ENCODE measurements at regions of chr9 and their contacts with region 1.

Region 1: GRCh38 chr9:114681594-114682332 is at the start of gene TEX48:
- DNase-seq: peak; percentile 56 to 86 (median 69)
- H3K4me3 ChIP-seq: no peak within 1 kb of the TSS
- H3K4me3 Mint-ChIP-seq: peak within 1 kb of the TSS in 6 of 7 donors; percentile 53 to 89 (median 74)
- H3K27ac ChIP-seq: no peak within 1 kb of the TSS
- H3K27ac Mint-ChIP-seq: peak within 1 kb of the TSS in 7 of 8 donors; percentile 3 to 95 (median 79)
- H3K4me1 ChIP-seq: peaks cover 6% of the 10 kb centered on the region
- H3K4me1 Mint-ChIP-seq: peaks cover 18 to 27% (median 19%) of the 10 kb centered on the region in 3 donors
- H3K27me3 ChIP-seq: peaks cover 9% of the 10 kb centered on the region
- H3K27me3 Mint-ChIP-seq: peaks cover 0 to 15% of the 10 kb centered on the region in 2 donors
- total RNA-seq, gene TEX48: 0.46 to 0.86 TPM

Region 2: DNA sequence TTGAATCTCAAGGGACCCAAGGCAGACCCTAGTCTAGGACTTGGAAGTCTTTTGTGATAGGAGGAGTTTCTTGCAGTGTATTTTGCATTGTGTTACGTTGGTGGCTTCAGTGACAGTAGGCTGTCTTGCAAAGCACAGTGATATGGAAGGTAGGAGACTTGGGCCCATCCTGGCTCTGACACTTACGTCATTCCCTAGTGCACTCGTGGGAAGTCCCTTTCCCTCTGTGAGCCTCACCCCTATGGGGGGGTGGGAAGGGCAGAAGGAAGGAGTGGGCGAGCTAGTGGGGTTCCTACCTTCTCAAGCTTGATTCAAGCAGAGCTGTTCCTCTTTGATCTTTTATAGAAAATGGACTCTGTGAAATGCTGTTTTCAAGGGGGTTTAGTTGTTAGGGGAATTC is 14.9 kb before region 1 on chr9:
- CTCF ChIA-PET with region 1: interaction called, 10 read pairs
- POLR2A ChIA-PET with region 1: no interaction called
- DNase-seq: no peak
- H3K4me3 ChIP-seq: no peak overlapping the region
- H3K4me3 Mint-ChIP-seq: no peak overlapping the region
- H3K27ac ChIP-seq: no peak overlapping the region
- H3K27ac Mint-ChIP-seq: peak overlapping the region in 1 of 8 donors; percentile 45
- H3K4me1 ChIP-seq: no peaks in the 10 kb centered on the region
- H3K4me1 Mint-ChIP-seq: peaks cover 0 to 3% (median 2%) of the 10 kb centered on the region in 3 donors
- H3K27me3 ChIP-seq: no peaks in the 10 kb centered on the region
- H3K27me3 Mint-ChIP-seq: peaks cover 10 to 18% of the 10 kb centered on the region in 2 donors

Region 3: GRCh38 chr9:114718801-114719221 is 37.0 kb after region 1 on chr9:
- CTCF ChIA-PET with region 1: interaction called, 10 read pairs
- POLR2A ChIA-PET with region 1: no interaction called
- DNase-seq: peak; percentile 25 to 87 (median 54)
- H3K4me3 ChIP-seq: peak overlapping the region; percentile 2
- H3K4me3 Mint-ChIP-seq: peak overlapping the region in 6 of 7 donors; percentile 60 to 78 (median 64)
- H3K27ac ChIP-seq: no peak overlapping the region
- H3K27ac Mint-ChIP-seq: peak overlapping the region; percentile 18 to 94 (median 86)
- H3K4me1 ChIP-seq: peaks cover 30% of the 10 kb centered on the region
- H3K4me1 Mint-ChIP-seq: peaks cover 39 to 70% (median 55%) of the 10 kb centered on the region in 3 donors
- H3K27me3 ChIP-seq: no peaks in the 10 kb centered on the region
- H3K27me3 Mint-ChIP-seq: no peaks in the 10 kb centered on the region

Region 4: DNA sequence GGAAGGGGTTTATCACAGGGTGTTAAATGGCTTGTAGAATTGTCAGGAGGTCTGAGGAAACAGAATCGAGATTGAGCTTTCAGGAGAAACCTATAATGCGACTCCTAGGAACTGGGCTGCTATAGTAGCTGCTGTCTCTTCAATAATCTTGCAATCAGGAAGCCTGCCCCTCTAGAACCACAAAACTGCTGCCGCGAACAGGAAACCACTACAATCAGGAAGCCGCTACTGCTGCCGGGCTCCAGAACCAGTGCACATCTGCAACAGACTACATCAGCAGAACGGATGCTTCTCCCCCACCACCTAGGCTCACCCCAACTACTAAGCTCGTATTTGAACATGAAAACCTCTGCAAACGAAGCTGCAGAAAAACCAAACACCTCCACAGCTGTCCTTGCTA is 217.0 kb after region 1 on chr9:
- CTCF ChIA-PET with region 1: interaction called, 77 read pairs
- POLR2A ChIA-PET with region 1: no interaction called
- DNase-seq: peak; percentile 54 to 89 (median 88)
- H3K4me3 ChIP-seq: peak overlapping the region; percentile 30
- H3K4me3 Mint-ChIP-seq: no peak overlapping the region
- H3K27ac ChIP-seq: no peak overlapping the region
- H3K27ac Mint-ChIP-seq: no peak overlapping the region
- H3K4me1 ChIP-seq: peaks cover 99% of the 10 kb centered on the region
- H3K4me1 Mint-ChIP-seq: peaks cover 0 to 25% (median 0%) of the 10 kb centered on the region in 3 donors
- H3K27me3 ChIP-seq: no peaks in the 10 kb centered on the region
- H3K27me3 Mint-ChIP-seq: no peaks in the 10 kb centered on the region

Region 5: GRCh38 chr9:114914139-114914538 is 232.4 kb after region 1 on chr9:
- CTCF ChIA-PET with region 1: interaction called, 77 read pairs
- POLR2A ChIA-PET with region 1: no interaction called
- DNase-seq: no peak
- H3K4me3 ChIP-seq: no peak overlapping the region
- H3K4me3 Mint-ChIP-seq: no peak overlapping the region
- H3K27ac ChIP-seq: no peak overlapping the region
- H3K27ac Mint-ChIP-seq: peak overlapping the region; percentile 44 to 90 (median 65)
- H3K4me1 ChIP-seq: peaks cover 39% of the 10 kb centered on the region
- H3K4me1 Mint-ChIP-seq: peaks cover 5 to 82% (median 69%) of the 10 kb centered on the region in 3 donors
- H3K27me3 ChIP-seq: no peaks in the 10 kb centered on the region
- H3K27me3 Mint-ChIP-seq: no peaks in the 10 kb centered on the region

Region 6: GRCh38 chr9:114981070-114981469 is 299.3 kb after region 1 on chr9:
- CTCF ChIA-PET with region 1: no interaction called
- POLR2A ChIA-PET with region 1: no interaction called
- DNase-seq: no peak
- H3K4me3 ChIP-seq: no peak overlapping the region
- H3K4me3 Mint-ChIP-seq: no peak overlapping the region
- H3K27ac ChIP-seq: no peak overlapping the region
- H3K27ac Mint-ChIP-seq: no peak overlapping the region
- H3K4me1 ChIP-seq: no peaks in the 10 kb centered on the region
- H3K4me1 Mint-ChIP-seq: no peaks in the 10 kb centered on the region
- H3K27me3 ChIP-seq: no peaks in the 10 kb centered on the region
- H3K27me3 Mint-ChIP-seq: peaks cover 0 to 2% of the 10 kb centered on the region in 2 donors

Region 7: DNA sequence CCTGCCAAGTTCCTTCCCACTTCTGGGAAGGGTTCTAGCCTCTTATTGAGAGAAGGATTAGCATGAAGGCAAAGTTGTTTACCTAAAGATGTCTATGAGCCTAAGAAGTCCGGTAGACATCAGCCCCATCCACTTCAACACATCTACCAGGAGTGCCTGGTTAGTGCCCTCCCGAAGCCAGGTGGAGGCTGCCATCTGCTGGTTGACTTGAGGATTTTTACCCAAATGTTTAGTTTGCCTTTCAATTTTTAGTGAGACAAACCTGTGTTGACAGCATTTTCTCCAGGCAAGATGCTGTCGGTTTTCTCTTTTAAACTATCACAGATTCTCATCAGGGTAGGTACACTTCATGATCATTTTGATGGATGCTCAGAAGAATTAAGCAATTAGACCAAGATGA is 332.2 kb after region 1 on chr9:
- CTCF ChIA-PET with region 1: interaction called, 151 read pairs
- POLR2A ChIA-PET with region 1: no interaction called
- DNase-seq: peak; percentile 58 to 85 (median 71)
- H3K4me3 ChIP-seq: no peak overlapping the region
- H3K4me3 Mint-ChIP-seq: no peak overlapping the region
- H3K27ac ChIP-seq: no peak overlapping the region
- H3K27ac Mint-ChIP-seq: peak overlapping the region in 1 of 8 donors; percentile 13
- H3K4me1 ChIP-seq: no peaks in the 10 kb centered on the region
- H3K4me1 Mint-ChIP-seq: peaks cover 1 to 23% (median 8%) of the 10 kb centered on the region in 3 donors
- H3K27me3 ChIP-seq: no peaks in the 10 kb centered on the region
- H3K27me3 Mint-ChIP-seq: peaks cover 0 to 8% of the 10 kb centered on the region in 2 donors